ENCODE measurements at regions of chr5 and their contacts with region 1.

Region 1: GRCh38 chr5:179806250-179807222 is at the start of gene MGAT4B:
- DNase-seq: peak; percentile 91
- H3K4me3 Mint-ChIP-seq: peak within 1 kb of the TSS; percentile 90
- H3K27ac Mint-ChIP-seq: peak within 1 kb of the TSS; percentile 72
- H3K4me1 Mint-ChIP-seq: peaks cover 32% of the 10 kb centered on the region
- H3K27me3 Mint-ChIP-seq: no peaks in the 10 kb centered on the region
- total RNA-seq, gene MGAT4B: 126 and 134 TPM in 2 replicates

Region 2: DNA sequence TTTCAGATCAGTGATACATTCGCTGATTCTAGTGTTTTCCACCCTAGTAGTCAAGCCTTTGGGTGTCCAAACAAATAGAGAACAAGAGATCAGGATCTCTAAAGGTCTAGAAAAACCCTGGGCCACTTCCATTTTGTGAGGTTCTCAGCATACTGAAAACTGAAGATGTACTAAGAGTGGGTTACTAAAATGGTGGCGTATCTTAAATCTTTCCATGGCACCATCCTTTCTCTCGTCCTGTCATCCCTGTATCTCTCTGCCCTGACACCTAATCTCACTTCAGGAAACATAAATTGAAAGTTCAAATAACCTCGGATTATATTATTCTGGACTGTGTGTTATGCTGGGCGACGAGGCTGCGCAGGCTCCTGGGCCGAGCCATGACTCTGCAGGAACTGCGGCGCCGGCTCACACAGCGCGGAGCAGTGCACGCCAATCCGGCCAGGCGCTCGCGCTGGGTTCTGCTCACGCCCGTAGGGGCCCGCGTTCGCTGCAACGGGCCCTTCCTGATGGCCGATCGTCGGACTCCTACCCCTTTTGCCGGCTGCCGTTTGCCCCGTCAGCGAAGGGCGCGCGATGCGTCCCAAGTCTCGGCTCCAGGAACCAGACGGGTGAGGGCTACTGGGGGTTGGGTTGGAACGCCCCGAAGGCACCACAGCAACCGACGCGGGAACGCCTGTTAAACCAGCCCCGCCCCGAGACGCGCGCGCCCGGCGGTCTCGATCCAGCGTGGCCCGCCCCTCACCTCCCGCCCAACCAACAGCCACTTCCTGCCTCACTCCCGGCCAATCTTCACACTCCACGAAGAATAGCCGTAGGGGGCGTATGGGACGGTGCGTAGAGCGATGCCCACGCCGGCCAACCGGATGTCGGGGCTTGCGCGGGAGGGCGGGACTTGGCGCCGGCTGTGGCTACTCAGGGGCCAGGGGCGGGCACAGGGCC is 108.3 kb before region 1 on chr5:
- intact Hi-C with region 1: loop called (anchors 5 kb)
- DNase-seq: peak; percentile 100
- H3K4me3 Mint-ChIP-seq: peak overlapping the region; percentile 89
- H3K27ac Mint-ChIP-seq: peak overlapping the region; percentile 99
- H3K4me1 Mint-ChIP-seq: peaks cover 27% of the 10 kb centered on the region
- H3K27me3 Mint-ChIP-seq: no peaks in the 10 kb centered on the region

Region 3: DNA sequence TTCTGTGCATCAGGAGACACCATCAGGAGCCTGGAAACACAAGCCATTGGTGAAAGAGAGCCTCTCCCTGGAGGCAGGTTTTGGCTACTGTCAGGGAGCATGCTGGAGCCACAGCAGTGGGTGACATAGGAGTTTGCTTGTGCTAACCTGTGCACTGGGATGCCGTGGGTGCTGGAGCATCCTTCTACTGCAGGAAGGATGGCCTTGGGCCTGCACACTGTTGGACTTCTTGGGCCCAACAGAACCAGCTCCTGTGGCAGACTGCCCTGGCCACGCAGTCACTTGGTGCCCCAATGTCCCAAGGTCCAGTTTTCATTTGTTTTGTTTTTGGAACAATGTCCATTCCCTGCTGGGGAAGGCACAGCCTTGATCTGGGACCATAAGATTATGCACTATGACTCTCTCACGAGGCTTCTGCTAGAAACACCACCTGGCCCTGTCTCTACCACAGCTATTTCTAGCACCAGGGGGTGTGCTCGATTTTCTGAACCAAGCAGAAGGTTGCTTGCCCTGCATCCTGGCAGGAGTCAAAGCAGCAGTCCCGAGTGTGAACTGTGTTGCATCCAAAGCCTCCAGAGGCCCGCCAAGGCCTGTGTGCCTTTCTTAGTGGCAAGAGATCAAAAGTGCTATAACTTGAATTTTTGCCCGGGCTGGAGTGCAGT is 18.2 kb before region 1 on chr5:
- intact Hi-C with region 1: no loop called
- DNase-seq: no peak
- H3K4me3 Mint-ChIP-seq: no peak overlapping the region
- H3K27ac Mint-ChIP-seq: no peak overlapping the region
- H3K4me1 Mint-ChIP-seq: peaks cover 1% of the 10 kb centered on the region
- H3K27me3 Mint-ChIP-seq: no peaks in the 10 kb centered on the region

Region 4: DNA sequence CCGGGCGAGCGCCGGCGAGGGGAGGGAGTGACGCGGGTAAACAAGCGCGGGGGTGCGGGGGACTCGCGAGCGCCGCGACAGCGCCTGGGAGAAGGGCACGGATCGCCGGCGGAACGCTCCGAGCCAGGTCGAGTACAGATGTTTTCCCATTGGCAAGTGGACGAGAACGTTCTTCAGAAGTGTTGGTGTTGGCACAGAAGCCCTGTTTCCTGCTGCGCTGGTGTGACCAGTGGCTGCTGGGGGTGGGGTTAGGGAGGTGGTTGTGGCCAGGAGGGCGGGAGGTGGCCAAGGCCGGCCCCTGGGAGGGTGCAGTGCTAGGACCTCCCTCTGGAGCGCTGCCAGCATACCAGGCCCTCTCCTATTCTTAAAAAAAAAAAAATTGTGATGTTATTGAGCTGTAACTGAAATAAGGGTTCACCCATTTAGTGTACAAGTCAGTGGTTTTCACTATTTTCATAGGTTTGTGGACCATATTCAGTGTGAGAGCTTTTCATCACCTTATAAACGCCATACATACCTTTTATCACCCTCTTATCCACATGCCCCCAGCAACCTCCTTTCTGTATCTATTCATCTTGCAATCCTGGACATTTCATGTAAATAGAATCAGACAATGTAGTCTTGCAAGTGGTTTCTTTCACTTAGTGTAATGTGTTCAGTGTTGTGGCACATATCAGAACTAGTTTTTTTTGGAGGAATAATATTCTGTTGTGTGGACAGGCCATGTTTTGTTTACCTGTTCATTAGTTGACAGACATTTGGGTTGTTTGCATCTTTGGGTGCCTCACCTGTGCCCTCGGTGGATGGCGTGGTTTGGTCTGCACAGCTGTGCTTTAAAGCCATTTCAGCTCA is 15.3 kb after region 1 on chr5:
- intact Hi-C with region 1: loop called (anchors 1 kb)
- DNase-seq: peak; percentile 96
- H3K4me3 Mint-ChIP-seq: peak overlapping the region; percentile 96
- H3K27ac Mint-ChIP-seq: peak overlapping the region; percentile 91
- H3K4me1 Mint-ChIP-seq: peaks cover 35% of the 10 kb centered on the region
- H3K27me3 Mint-ChIP-seq: no peaks in the 10 kb centered on the region

Region 5: GRCh38 chr5:179836225-179837019 is 29.9 kb after region 1 on chr5:
- intact Hi-C with region 1: loop called (anchors 5 kb)
- DNase-seq: peak; percentile 89
- H3K4me3 Mint-ChIP-seq: peak overlapping the region; percentile 61
- H3K27ac Mint-ChIP-seq: peak overlapping the region; percentile 87
- H3K4me1 Mint-ChIP-seq: peaks cover 18% of the 10 kb centered on the region
- H3K27me3 Mint-ChIP-seq: no peaks in the 10 kb centered on the region

Region 6: DNA sequence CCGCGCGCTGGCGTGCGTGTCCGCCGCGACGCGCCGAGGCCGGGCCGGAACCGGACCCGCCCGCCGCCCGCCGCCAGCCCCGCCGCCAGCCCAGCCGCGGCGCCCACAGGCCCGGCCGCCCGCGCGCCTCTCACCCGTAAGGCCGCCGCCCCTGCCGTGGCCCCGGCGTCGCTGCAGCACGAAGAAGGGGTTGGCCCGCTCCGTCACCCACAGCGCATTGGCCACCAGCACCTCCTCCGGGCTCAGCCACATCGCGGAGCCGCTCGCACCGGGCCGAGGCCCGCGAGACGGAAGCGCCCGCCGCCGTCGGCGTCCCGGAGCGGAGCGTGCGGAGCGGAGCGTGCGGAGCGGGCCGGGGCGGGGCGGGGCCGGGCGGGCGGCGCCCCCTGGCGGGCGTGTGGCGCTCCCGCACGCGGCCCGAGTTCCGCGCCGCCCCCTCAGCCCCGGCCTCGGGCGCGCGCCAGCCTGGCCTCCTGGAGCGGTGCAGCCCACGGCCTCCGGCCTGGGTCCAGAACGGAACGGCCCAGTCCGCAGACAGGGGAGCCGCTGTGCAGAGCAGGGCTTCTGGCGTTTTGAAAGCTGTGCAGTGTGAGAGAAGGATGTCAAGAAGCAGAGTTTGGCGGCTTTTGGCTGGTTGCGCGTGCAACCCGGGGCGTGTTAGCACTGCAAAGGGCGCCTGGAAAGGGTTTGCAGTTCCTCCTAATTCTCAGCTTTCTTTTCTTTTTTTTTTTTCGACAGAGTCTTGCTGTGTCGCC is 101.2 kb after region 1 on chr5 and contains the start of gene TBC1D9B:
- intact Hi-C with region 1: loop called (anchors 2 kb)
- DNase-seq: peak; percentile 92
- H3K4me3 Mint-ChIP-seq: peak within 1 kb of the TSS; percentile 96
- H3K27ac Mint-ChIP-seq: peak within 1 kb of the TSS; percentile 92
- H3K4me1 Mint-ChIP-seq: peaks cover 11% of the 10 kb centered on the region
- H3K27me3 Mint-ChIP-seq: no peaks in the 10 kb centered on the region
- total RNA-seq, gene TBC1D9B: 129 and 138 TPM in 2 replicates